ENCODE measurements at regions of chr3 and their contacts with region 1.

Region 1: GRCh38 chr3:71968544-71968943 is 183.6 kb upstream of the PROK2 start:
- DNase-seq: no peak
- CTCF ChIP-seq: no peak

Region 2: GRCh38 chr3:71907996-71908395 is 60.5 kb before region 1 on chr3:
- CTCF ChIA-PET with region 1: no interaction called
- POLR2A ChIA-PET with region 1: no interaction called
- DNase-seq: no peak
- CTCF ChIP-seq: no peak

Region 3: DNA sequence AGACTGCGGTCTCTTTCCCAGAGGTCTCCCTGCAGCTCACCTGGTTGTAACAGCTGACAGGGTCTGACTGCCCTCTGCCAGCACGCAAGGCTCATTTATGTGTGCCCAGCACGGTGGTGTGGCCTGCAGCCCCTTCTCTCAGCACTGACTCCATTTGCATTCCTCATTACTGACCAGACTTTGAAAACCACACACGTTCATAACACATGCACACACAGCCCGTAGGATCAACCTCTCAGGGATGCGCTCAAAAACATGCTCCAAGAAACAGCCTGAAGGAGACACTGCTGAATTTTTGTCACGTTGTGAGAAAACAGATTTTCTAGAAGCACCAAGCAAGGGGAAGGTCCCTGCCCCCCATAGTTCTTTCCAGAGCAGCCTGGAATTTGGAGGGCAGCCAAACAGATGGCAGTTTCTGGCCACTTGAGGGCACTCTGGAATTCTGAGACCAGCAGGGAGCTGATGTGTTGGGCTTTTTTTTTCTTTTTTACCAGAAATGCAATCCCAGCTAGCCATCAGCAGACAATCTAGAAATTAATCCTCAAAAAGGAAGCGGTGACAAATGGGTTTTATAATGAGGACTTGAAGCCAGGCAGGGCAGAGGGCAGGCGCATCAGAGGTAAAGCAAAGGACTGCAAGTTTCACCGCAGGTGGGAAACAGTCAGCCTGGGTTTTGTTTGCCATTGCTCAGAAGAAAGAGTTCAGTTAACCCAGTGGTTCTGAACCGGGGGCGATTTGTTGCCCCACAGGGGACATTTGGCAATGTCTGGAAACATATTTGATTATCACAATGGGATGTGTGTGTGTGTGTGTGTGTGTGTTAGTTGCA is 13.1 kb before region 1 on chr3:
- CTCF ChIA-PET with region 1: interaction called, 14 read pairs
- POLR2A ChIA-PET with region 1: no interaction called
- DNase-seq: peak; percentile 41
- CTCF ChIP-seq: peak; percentile 68